ENCODE measurements at regions of chr3 and their contacts with region 1.

Region 1: GRCh38 chr3:98513091-98513511 is 9.6 kb downstream of the CLDND1 start:
- DNase-seq: peak; percentile 89
- ATAC-seq: peak; percentile 83
- H3K4me3 ChIP-seq: peak overlapping the region; percentile 3; the same call in 1 of the 2 replicates
- H3K27ac ChIP-seq: peak overlapping the region; percentile 77
- H3K4me1 ChIP-seq: peaks cover 31% of the 10 kb centered on the region
- H3K27me3 ChIP-seq: no peaks in the 10 kb centered on the region
- CTCF ChIP-seq: no peak

Region 2: DNA sequence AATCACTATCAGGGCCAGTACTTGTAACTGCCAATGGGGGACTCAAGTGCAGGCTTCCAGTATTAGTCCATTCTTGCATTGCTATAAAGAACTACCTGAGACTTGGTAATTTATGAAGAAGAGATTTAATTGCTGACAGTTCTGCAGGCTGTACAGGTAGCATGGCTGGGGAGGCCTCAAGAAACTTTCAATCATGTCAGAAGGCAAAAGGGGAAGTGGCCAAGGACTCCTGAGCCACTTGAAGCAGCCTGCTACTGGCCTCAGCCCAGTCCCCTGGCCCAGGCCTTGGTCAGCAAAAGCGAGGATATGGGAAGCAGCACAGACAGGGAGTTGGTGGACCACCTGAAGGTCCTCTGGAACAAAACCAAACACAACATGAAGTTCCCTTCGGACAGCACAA is 79.3 kb before region 1 on chr3:
- CTCF ChIA-PET with region 1: no interaction called
- POLR2A ChIA-PET with region 1: no interaction called
- intact Hi-C with region 1: no loop called
- DNase-seq: no peak
- ATAC-seq: no peak
- H3K4me3 ChIP-seq: no peak overlapping the region
- H3K27ac ChIP-seq: no peak overlapping the region
- H3K4me1 ChIP-seq: no peaks in the 10 kb centered on the region
- H3K27me3 ChIP-seq: 0 out of 2 replicates have a peak, but pooled peaks cover 3% of the 10 kb centered on the region
- CTCF ChIP-seq: no peak

Region 3: DNA sequence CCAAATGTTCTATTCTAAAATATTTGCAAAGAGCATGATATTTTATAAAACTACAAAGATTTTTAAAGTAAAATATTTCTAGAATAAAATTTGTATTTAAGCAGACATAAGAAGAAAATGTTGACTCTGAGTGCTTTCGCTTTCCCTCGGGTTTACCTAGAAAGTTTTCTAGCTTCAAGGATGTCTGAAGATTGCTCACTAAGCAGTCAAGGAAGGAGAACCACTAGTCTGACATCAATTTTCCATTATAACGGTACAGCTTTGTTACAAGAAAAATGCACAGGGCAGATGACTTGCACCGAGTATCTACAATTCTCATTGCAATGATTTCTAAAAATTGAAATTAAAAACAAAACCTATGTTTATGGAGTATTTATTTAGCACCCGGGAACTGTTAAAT is 32.8 kb after region 1 on chr3:
- CTCF ChIA-PET with region 1: no interaction called
- POLR2A ChIA-PET with region 1: no interaction called
- intact Hi-C with region 1: loop called (anchors 1 kb)
- DNase-seq: no peak
- ATAC-seq: no peak
- H3K4me3 ChIP-seq: no peak overlapping the region
- H3K27ac ChIP-seq: no peak overlapping the region
- H3K4me1 ChIP-seq: no peaks in the 10 kb centered on the region
- H3K27me3 ChIP-seq: peaks cover 16% of the 10 kb centered on the region
- CTCF ChIP-seq: no peak

Region 4: DNA sequence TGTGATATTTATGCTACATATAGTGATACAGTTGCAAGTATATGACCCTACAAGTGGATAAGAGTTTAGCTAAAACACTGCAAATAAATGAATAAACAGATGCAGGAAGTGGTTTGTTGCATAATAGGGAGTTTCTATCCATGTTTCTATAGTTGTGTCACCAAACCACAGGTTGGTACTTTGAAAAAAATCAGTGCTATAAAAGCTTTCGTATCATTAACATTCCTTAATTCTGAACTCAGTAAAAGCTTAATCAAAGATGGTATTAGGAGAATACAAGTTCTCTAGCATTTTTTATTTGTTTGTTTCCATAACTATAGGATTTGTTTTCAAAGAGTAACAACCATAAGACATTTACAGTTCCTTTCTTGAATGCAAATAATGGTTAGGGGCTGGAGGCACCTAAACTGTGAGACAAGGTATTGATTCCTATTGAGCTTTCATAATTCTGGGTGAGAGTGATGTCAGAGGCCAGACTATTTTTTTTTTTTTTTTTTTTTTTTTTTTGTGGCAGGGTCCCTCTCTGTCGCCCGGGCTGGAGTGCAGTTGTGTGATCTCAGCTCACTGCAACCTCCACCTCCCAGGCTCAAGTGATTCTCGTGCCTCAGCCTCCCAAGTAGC is 50.7 kb after region 1 on chr3:
- CTCF ChIA-PET with region 1: no interaction called
- POLR2A ChIA-PET with region 1: no interaction called
- intact Hi-C with region 1: loop called (anchors 1 kb)
- DNase-seq: peak; percentile 81
- ATAC-seq: peak; percentile 43
- H3K4me3 ChIP-seq: no peak overlapping the region
- H3K27ac ChIP-seq: peak overlapping the region; percentile 62
- H3K4me1 ChIP-seq: peaks cover 50% of the 10 kb centered on the region
- H3K27me3 ChIP-seq: no peaks in the 10 kb centered on the region
- CTCF ChIP-seq: no peak

Region 5: DNA sequence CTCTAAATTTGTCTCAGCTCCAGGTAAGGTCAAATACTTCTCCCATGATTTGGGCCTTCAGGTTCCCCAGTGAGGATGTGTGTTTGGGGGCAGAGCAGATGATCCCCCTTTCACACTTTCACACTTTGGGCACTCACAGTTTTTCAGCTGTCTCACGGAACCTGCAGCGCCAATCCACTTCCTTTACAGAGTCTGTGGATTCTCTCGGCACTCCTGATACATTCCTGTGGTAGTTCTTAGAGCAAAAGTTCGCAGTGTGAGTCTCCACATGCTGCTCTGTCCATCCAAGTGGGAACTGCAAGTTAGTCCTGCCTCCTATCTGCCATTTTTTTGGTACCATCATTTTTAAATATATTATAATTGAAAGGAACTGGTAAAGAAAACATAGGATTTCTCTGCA is 100.5 kb after region 1 on chr3:
- CTCF ChIA-PET with region 1: no interaction called
- POLR2A ChIA-PET with region 1: no interaction called
- intact Hi-C with region 1: no loop called
- DNase-seq: no peak
- ATAC-seq: no peak
- H3K4me3 ChIP-seq: no peak overlapping the region
- H3K27ac ChIP-seq: no peak overlapping the region
- H3K4me1 ChIP-seq: no peaks in the 10 kb centered on the region
- H3K27me3 ChIP-seq: no peaks in the 10 kb centered on the region
- CTCF ChIP-seq: no peak

Measured in PC-3 (cell line).